IMR-90 (cell line): ENCODE measurements at regions of chr7 and their contacts with region 1.

Region 1: GRCh38 chr7:7438851-7439250 is 96.8 kb downstream of the COL28A1 start:
- DNase-seq: peak; percentile 99
- ATAC-seq: peak; percentile 97
- H3K4me3 ChIP-seq: no peak overlapping the region
- H3K27ac ChIP-seq: peak overlapping the region; percentile 78
- H3K4me1 ChIP-seq: peaks cover 8% of the 10 kb centered on the region
- H3K27me3 ChIP-seq: no peaks in the 10 kb centered on the region
- CTCF ChIP-seq: no peak
- POLR2A ChIP-seq: no peak
- RAD21 ChIP-seq: no peak

Region 2: GRCh38 chr7:7489546-7489945 is 50.7 kb after region 1 on chr7:
- CTCF ChIA-PET with region 1: interaction called, 3 read pairs
- POLR2A ChIA-PET with region 1: no interaction called
- dilution Hi-C with region 1: no loop called
- in situ Hi-C with region 1: no loop called
- intact Hi-C with region 1: loop called (anchors 2 kb)
- DNase-seq: no peak
- ATAC-seq: no peak
- H3K4me3 ChIP-seq: no peak overlapping the region
- H3K27ac ChIP-seq: no peak overlapping the region
- H3K4me1 ChIP-seq: peaks cover 10% of the 10 kb centered on the region
- H3K27me3 ChIP-seq: no peaks in the 10 kb centered on the region
- CTCF ChIP-seq: no peak
- POLR2A ChIP-seq: no peak
- RAD21 ChIP-seq: no peak